Activated CD4-positive, alpha-beta memory T cell treated with anti-CD3 and anti-CD28 coated beads for 36 hours (primary cell): ENCODE measurements at regions of chr7 and their contacts with region 1.

Region 1: DNA sequence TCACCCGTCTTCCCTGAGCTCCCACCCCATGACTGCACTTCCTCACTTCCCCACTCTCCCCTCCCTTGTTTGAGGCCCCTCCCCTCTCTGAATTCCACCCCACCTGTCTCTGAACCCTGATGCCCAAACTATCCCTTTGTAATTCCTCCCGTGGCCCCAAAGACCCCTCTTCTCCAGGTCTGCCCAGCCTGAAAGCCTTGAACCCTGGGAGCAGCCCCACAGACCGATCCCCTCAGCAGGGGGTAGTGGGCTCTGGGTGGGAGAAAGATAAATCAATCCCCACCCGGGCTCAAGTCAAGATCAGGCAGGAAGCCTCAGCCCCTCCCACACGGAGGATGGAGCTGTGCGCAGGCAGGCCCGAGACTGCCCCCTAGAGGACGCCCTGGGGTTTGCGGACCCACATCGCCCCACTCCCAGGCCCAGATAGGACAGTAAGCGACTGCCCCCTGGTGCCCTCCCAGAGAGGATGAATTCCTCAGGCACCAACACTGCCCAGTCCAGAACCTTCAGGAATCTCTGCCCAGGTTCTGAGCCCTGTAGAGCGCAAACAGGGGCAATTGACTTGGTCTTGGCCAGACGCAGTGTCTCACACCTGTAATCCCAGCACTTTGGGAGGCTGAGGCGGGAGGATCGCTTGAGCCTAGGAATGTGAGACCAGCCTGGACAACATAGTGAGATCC is 11.7 kb downstream of the HSPB1 start:
- DNase-seq: peak; percentile 98
- H3K4me3 Mint-ChIP-seq: no peak overlapping the region
- H3K27ac Mint-ChIP-seq: peak overlapping the region; percentile 62
- H3K4me1 Mint-ChIP-seq: peaks cover 17% of the 10 kb centered on the region
- H3K27me3 Mint-ChIP-seq: no peaks in the 10 kb centered on the region

Region 2: GRCh38 chr7:75878769-75879611 is 435.2 kb before region 1 on chr7 and contains the start of gene RHBDD2:
- CTCF ChIA-PET with region 1: no interaction called
- POLR2A ChIA-PET with region 1: no interaction called
- intact Hi-C with region 1: loop called (anchors 2 kb)
- DNase-seq: peak; percentile 98
- H3K4me3 Mint-ChIP-seq: peak within 1 kb of the TSS; percentile 96
- H3K27ac Mint-ChIP-seq: peak within 1 kb of the TSS; percentile 90
- H3K4me1 Mint-ChIP-seq: peaks cover 29% of the 10 kb centered on the region
- H3K27me3 Mint-ChIP-seq: no peaks in the 10 kb centered on the region
- total RNA-seq, gene RHBDD2: 30.1 to 31.9 TPM

Region 3: DNA sequence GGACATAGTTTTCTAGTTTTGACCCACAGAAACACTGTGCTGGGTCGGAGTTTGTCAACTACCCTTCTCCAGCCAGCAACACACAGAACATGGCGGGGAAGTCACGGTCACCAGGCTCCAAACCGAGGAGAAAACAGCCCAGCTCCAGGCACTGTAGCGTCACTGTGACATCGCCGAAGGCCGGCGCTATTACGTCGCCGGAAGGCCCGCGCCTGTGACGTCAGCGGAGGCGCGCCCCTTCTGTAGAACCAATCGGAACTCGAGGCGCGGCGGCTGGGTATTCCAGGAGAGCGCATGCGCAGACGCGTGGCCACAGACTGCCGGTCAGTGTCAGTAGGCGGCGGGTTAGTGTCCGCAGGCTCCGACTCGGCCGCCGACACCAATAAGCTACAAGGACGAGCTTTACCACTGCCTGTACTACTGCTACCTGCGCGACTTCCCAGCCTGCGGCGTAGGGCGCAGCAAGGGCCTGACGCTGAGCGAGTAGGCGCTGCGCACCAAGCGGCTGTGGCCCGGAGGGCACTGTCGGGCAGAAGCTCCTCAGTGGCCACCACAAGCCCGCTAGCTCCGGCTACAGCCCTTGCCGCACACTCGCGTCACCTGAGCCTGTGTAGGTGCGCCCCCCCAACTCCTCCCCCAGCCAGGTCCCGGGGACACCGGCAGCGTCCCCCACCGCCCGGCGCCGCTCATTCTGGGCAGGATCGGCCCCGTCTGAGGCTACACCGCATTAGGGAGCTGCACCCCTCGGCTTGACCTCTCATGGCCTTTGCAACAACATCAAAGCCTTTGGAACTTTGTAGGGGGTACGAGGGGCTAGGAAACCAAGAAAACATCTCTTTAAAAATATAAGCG is 147.6 kb before region 1 on chr7:
- CTCF ChIA-PET with region 1: interaction called, 12 read pairs
- POLR2A ChIA-PET with region 1: interaction called, 6 read pairs
- intact Hi-C with region 1: no loop called
- DNase-seq: peak; percentile 95
- H3K4me3 Mint-ChIP-seq: peak overlapping the region; percentile 82
- H3K27ac Mint-ChIP-seq: peak overlapping the region; percentile 73
- H3K4me1 Mint-ChIP-seq: peaks cover 6% of the 10 kb centered on the region
- H3K27me3 Mint-ChIP-seq: no peaks in the 10 kb centered on the region

Region 4: DNA sequence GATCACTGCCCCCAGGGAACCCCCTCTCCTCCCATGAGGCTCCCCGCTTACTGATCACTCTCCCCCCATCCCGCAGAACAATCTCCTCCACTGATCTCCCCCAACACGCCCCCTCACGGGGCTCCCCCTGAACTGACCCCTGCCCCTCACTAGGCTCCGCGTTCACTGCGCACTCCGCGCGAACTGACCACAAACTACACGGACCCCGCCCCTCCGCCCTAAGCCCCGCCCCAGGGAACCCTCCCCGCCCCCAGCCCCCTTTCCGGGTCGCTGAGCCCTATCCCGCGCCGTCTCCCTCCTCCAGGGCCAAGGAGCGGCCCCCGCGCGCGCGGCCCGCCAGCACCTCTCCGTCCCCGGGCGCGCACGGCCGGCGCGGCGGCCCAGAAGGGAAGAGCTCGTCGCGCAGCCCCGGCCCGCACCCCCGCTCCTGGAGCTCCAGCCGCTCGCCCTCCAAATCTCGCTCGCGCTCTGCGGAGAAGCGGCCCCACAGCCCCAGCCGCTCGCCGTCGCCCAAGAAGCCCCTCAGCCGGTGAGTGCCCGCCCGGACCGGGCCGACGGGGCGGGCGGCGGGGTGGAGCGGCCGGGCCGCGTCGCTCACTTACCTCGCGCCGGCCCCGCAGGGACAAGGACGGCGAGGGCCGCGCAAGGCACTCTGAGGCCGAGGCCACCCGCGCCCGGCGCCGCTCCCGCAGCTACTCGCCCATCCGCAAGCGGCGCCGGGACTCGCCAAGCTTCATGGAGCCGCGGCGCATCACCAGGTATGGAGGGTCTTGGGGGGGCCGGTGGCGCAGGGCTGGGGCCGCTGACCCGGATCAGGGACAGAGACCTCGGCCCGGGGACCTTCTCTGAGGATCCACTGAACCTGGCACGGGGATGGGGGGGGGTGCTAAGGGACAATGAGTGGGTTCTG is 31.6 kb before region 1 on chr7:
- CTCF ChIA-PET with region 1: interaction called, 11 read pairs
- POLR2A ChIA-PET with region 1: interaction called, 3 read pairs
- intact Hi-C with region 1: loop called (anchors 5 kb)
- DNase-seq: no peak
- H3K4me3 Mint-ChIP-seq: peak overlapping the region; percentile 46
- H3K27ac Mint-ChIP-seq: no peak overlapping the region
- H3K4me1 Mint-ChIP-seq: peaks cover 6% of the 10 kb centered on the region
- H3K27me3 Mint-ChIP-seq: peaks cover 30% of the 10 kb centered on the region

Region 5: GRCh38 chr7:76302347-76303201 is 11.6 kb before region 1 on chr7 and contains the start of gene HSPB1:
- CTCF ChIA-PET with region 1: interaction called, 16 read pairs
- POLR2A ChIA-PET with region 1: interaction called, 7 read pairs
- intact Hi-C with region 1: loop called (anchors 1 kb)
- DNase-seq: peak; percentile 81
- H3K4me3 Mint-ChIP-seq: peak within 1 kb of the TSS; percentile 83
- H3K27ac Mint-ChIP-seq: peak within 1 kb of the TSS; percentile 81
- H3K4me1 Mint-ChIP-seq: peaks cover 12% of the 10 kb centered on the region
- H3K27me3 Mint-ChIP-seq: peaks cover 3% of the 10 kb centered on the region
- total RNA-seq, gene HSPB1: 119 to 127 TPM

Region 6: DNA sequence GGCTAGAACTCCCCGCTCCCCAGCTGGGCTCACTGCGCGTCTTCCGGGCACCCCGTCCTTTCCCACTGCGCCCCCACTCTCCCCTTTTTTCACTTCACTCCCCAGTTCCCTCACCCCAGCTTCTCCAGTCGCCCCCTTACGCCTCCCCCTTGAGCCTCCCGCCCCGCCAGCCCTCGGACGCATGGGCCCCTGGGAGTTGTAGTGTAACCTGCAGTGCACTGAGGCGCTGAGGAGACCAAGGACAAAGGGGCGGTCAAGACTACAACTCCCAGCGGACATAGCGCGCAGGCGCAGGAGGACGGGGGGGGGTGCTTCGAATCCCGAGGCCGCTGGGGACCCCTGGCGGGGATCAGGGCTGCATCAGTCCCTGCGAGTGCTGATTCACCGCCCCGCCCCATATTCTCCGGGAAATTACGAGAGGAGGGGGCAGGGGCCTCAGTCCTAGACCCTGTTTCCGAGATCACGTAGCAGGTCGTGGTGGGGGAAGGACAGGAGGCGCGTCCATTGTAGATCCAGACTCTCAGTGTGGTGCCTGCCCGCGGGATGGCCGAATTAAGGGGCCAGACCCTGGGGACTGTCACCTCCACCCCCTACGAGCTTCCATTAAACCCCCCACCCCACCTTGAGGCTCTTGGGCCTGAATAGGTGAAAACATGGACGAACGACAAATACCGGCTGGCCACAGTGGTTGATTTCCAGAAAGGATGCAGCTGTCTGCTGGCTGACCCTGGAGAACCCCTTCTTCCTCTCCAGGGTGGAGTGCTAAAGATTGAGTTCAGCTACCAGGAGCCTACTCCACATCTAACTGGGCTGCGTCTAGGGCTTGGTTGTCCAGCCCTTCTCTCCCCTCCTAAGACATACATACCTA is 45.2 kb after region 1 on chr7:
- CTCF ChIA-PET with region 1: interaction called, 11 read pairs
- POLR2A ChIA-PET with region 1: interaction called, 44 read pairs
- intact Hi-C with region 1: loop called (anchors 1 kb)
- DNase-seq: peak; percentile 99
- H3K4me3 Mint-ChIP-seq: peak overlapping the region; percentile 88
- H3K27ac Mint-ChIP-seq: peak overlapping the region; percentile 95
- H3K4me1 Mint-ChIP-seq: peaks cover 44% of the 10 kb centered on the region
- H3K27me3 Mint-ChIP-seq: no peaks in the 10 kb centered on the region